MCF 10A (cell line): ENCODE measurements at regions of chr1 and their contacts with region 1.

Region 1: GRCh38 chr1:64038965-64039926 is 164.2 kb upstream of the UBE2U start:
- DNase-seq: peak; percentile 98
- H3K4me3 Mint-ChIP-seq: peak overlapping the region; percentile 28
- H3K27ac Mint-ChIP-seq: peak overlapping the region; percentile 82
- H3K4me1 Mint-ChIP-seq: peaks cover 64% of the 10 kb centered on the region
- H3K27me3 Mint-ChIP-seq: no peaks in the 10 kb centered on the region
- CTCF ChIP-seq: no peak

Region 2: DNA sequence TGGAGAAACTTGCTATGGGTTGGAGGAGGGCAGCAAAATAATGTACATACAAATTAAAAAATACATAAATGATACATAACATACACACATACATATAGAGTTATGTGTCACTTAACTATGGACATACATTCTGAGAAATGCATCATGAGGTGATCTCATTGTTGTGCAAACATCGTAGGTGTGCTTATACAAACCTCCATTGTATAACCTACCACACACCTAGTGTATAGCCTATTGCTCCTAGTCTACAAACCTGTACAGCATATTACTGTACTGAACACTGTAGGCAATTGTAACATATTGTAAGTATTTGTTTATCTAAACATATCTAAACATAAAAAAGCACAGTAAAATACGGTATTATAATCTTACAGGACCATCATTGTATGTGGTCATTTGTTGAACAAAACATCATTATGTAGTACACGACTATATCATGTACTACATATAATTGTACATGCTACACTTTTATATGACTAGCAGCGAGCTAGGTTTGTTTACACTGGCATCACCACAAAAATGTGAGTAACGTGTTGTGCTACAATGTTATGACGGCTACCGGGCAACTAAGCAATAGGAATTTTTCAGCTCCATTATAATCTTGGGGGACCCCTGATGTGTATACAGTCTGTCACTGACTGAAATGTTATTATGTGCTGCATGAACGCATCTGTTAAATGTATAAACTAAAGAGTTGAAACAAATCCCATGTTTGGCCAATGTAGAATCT is 551.7 kb before region 1 on chr1:
- CTCF ChIA-PET with region 1: no interaction called
- POLR2A ChIA-PET with region 1: no interaction called
- intact Hi-C with region 1: no loop called
- DNase-seq: peak; percentile 48
- H3K4me3 Mint-ChIP-seq: no peak overlapping the region
- H3K27ac Mint-ChIP-seq: no peak overlapping the region
- H3K4me1 Mint-ChIP-seq: peaks cover 2% of the 10 kb centered on the region
- H3K27me3 Mint-ChIP-seq: no peaks in the 10 kb centered on the region
- CTCF ChIP-seq: no peak

Region 3: GRCh38 chr1:63731117-63732043 is 307.9 kb before region 1 on chr1:
- CTCF ChIA-PET with region 1: interaction called, 3 read pairs
- POLR2A ChIA-PET with region 1: interaction called, 11 read pairs
- intact Hi-C with region 1: no loop called
- DNase-seq: peak; percentile 96
- H3K4me3 Mint-ChIP-seq: peak overlapping the region; percentile 56
- H3K27ac Mint-ChIP-seq: peak overlapping the region; percentile 80
- H3K4me1 Mint-ChIP-seq: peaks cover 29% of the 10 kb centered on the region
- H3K27me3 Mint-ChIP-seq: no peaks in the 10 kb centered on the region
- CTCF ChIP-seq: no peak

Region 4: GRCh38 chr1:64006276-64007051 is 32.8 kb before region 1 on chr1:
- CTCF ChIA-PET with region 1: interaction called, 3 read pairs
- POLR2A ChIA-PET with region 1: interaction called, 10 read pairs
- intact Hi-C with region 1: no loop called
- DNase-seq: peak; percentile 78
- H3K4me3 Mint-ChIP-seq: no peak overlapping the region
- H3K27ac Mint-ChIP-seq: peak overlapping the region; percentile 76
- H3K4me1 Mint-ChIP-seq: peaks cover 30% of the 10 kb centered on the region
- H3K27me3 Mint-ChIP-seq: no peaks in the 10 kb centered on the region
- CTCF ChIP-seq: no peak

Region 5: DNA sequence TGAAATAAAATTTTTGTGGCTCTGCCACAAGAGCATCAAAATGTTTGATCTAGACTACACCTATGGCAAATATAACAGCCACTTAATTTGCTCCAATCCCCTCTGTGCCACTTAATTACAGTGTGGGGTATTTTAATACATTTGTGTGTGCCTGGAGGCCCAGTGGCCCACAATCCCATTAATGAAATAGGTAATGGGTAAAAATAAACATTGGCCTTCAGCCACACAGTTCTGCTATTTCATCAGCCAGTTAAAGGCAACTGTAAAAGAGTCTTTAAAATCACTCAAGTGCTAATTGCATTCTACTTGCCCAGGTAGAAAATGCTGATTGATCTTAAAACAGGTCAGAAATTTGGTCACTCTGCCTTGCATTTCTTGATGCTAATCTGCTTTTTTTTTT is 12.6 kb after region 1 on chr1:
- CTCF ChIA-PET with region 1: no interaction called
- POLR2A ChIA-PET with region 1: interaction called, 10 read pairs
- intact Hi-C with region 1: no loop called
- DNase-seq: no peak
- H3K4me3 Mint-ChIP-seq: no peak overlapping the region
- H3K27ac Mint-ChIP-seq: no peak overlapping the region
- H3K4me1 Mint-ChIP-seq: peaks cover 14% of the 10 kb centered on the region
- H3K27me3 Mint-ChIP-seq: no peaks in the 10 kb centered on the region
- CTCF ChIP-seq: no peak

Region 6: DNA sequence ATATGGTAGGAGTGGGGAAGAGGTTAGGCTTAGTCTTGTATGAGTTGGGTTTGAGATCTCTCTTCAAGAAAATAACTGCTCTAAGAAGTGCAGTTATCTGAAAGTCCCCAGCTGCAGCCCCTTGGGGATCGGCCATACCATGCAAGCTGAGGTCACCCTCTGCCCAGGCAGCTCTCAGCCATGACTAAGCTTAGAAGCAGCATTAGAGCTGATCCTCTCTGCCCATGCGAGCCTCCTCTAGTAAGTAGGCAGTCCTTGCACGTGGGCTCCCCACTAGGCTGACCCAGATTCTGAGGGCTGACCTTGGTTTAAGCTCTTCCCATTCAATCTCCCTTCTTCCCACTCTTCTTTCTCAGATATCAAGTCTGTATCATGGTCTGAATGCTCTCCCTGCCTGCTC is 43.2 kb after region 1 on chr1:
- CTCF ChIA-PET with region 1: interaction called, 3 read pairs
- POLR2A ChIA-PET with region 1: interaction called, 13 read pairs
- intact Hi-C with region 1: no loop called
- DNase-seq: peak; percentile 21
- H3K4me3 Mint-ChIP-seq: no peak overlapping the region
- H3K27ac Mint-ChIP-seq: no peak overlapping the region
- H3K4me1 Mint-ChIP-seq: peaks cover 7% of the 10 kb centered on the region
- H3K27me3 Mint-ChIP-seq: no peaks in the 10 kb centered on the region
- CTCF ChIP-seq: no peak

Region 7: GRCh38 chr1:64112281-64112680 is 73.0 kb after region 1 on chr1:
- CTCF ChIA-PET with region 1: no interaction called
- POLR2A ChIA-PET with region 1: interaction called, 20 read pairs
- intact Hi-C with region 1: loop called (anchors 5 kb)
- DNase-seq: peak; percentile 34
- H3K4me3 Mint-ChIP-seq: no peak overlapping the region
- H3K27ac Mint-ChIP-seq: no peak overlapping the region
- H3K4me1 Mint-ChIP-seq: peaks cover 13% of the 10 kb centered on the region
- H3K27me3 Mint-ChIP-seq: no peaks in the 10 kb centered on the region
- CTCF ChIP-seq: no peak

Region 8: GRCh38 chr1:64121766-64122385 is 82.6 kb after region 1 on chr1:
- CTCF ChIA-PET with region 1: interaction called, 5 read pairs
- POLR2A ChIA-PET with region 1: interaction called, 22 read pairs
- intact Hi-C with region 1: loop called (anchors 5 kb)
- DNase-seq: no peak
- H3K4me3 Mint-ChIP-seq: no peak overlapping the region
- H3K27ac Mint-ChIP-seq: no peak overlapping the region
- H3K4me1 Mint-ChIP-seq: no peaks in the 10 kb centered on the region
- H3K27me3 Mint-ChIP-seq: no peaks in the 10 kb centered on the region
- CTCF ChIP-seq: no peak